Right ventricle myocardium superior (tissue), 1 donor: ENCODE measurements at regions of chr18 and their contacts with region 1.

Region 1: GRCh38 chr18:26863122-26863879 is 2.2 kb downstream of the AQP4 start:
- DNase-seq: peak; percentile 88
- ATAC-seq: peak; percentile 95

Region 2: GRCh38 chr18:26963292-26963691 is 100.0 kb after region 1 on chr18:
- intact Hi-C with region 1: loop called (anchors 10 kb)
- DNase-seq: no peak
- ATAC-seq: peak; percentile 74